H1 (cell line): ENCODE measurements at regions of chr4 and their contacts with region 1.

Region 1: DNA sequence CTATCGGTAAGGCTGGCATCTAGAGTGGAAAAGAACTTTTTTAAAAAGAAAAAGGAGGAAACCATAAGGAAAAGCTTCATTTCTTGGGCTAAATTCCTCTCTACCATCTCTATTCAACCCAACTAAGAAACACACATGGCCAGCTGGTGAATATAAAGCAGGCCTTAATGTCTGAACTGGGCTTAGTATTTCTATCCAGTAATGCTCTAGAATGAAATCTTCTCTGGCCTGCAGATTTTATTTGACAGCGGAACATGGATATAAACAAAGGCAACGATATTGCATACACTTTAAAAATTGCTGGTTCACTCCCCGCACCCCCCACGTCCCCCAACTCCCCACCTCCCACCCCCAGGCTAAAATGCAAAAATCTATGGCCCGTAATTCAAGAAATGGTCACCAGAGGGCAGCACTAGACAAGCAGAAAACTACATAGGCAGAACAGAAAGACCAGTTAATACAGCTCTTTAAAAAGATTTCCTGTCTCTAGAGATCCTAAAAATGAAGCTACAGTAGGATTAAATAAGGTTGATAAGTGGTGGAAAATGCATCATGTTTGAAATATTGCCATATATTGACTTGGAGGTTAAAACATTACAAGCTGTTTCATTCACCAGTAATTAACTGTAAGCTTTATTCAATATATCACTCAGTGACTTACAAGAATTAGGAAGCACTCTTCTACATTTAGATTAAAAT is 155.2 kb upstream of the GALNT7 start:
- DNase-seq: peak in 1 of 2 experiments; percentile 88
- H3K4me3 ChIP-seq: no peak overlapping the region
- H3K27ac ChIP-seq: no peak overlapping the region
- H3K4me1 ChIP-seq: peaks cover 0 to 3% (median 1%) of the 10 kb centered on the region in 4 experiments; a peak in 4 of 7 replicates
- H3K27me3 ChIP-seq: no peaks in the 10 kb centered on the region
- CTCF ChIP-seq: peak in 2 of 3 experiments; percentile 46 to 69; a peak in 3 of 4 replicates
- EP300 ChIP-seq: no peak
- POLR2A ChIP-seq: no peak
- RAD21 ChIP-seq: peak; percentile 80 to 86

Region 2: DNA sequence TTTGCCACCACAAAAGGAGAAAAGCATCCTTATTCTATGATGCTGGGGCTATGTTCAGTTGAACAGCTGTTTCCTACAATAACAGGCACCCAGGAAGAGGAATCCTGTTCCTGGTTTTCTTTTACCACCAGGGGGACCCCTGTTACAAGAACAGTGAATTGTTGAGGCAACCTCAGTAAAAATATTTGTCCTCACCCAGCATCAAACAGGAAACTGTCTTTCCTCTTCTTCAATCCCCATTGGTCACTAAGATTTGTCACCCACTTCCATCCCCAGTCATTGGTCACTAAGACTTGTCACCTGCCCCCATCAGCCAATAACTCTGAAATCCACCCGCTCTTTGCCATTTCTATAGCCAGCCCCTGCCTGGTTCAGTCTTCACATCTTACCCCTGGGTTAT is 11.8 kb after region 1 on chr4:
- CTCF ChIA-PET with region 1: interaction called, 44 read pairs
- POLR2A ChIA-PET with region 1: interaction called, 4 read pairs
- DNase-seq: peak; percentile 27 to 60
- H3K4me3 ChIP-seq: no peak overlapping the region
- H3K27ac ChIP-seq: no peak overlapping the region
- H3K4me1 ChIP-seq: peaks cover 2 to 8% (median 4%) of the 10 kb centered on the region in 4 experiments; a peak in 4 of 7 replicates
- H3K27me3 ChIP-seq: no peaks in the 10 kb centered on the region
- CTCF ChIP-seq: peak in 2 of 3 experiments; percentile 68 to 81; a peak in 3 of 4 replicates
- EP300 ChIP-seq: no peak
- POLR2A ChIP-seq: no peak
- RAD21 ChIP-seq: peak; percentile 94

Region 3: GRCh38 chr4:173061160-173061559 is 47.8 kb after region 1 on chr4:
- CTCF ChIA-PET with region 1: no interaction called
- POLR2A ChIA-PET with region 1: no interaction called
- DNase-seq: no peak
- H3K4me3 ChIP-seq: no peak overlapping the region
- H3K27ac ChIP-seq: no peak overlapping the region
- H3K4me1 ChIP-seq: peaks cover 0 to 5% (median 0%) of the 10 kb centered on the region in 4 experiments; a peak in 2 of 7 replicates
- H3K27me3 ChIP-seq: no peaks in the 10 kb centered on the region
- CTCF ChIP-seq: no peak
- EP300 ChIP-seq: no peak
- POLR2A ChIP-seq: no peak
- RAD21 ChIP-seq: no peak

Region 4: DNA sequence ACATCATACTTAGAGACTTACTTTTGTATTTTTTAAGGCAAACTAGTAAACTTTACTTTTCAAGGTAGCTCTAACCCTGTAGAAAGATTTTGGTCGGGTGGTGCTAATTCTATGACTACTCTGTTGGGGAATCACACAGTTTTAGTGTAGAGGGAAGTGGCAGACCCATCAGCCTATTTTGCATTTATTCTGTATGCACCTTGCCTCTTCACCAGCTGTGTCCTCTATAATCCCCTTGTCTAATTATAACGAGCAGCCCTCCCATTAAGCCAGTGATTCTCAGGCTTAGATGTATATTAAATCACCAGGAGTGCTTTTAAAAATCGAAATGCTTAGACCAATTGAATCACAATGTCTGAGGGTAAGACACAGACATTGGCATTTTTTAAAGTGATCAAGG is 233.3 kb after region 1 on chr4:
- CTCF ChIA-PET with region 1: interaction called, 10 read pairs
- POLR2A ChIA-PET with region 1: no interaction called
- DNase-seq: no peak
- H3K4me3 ChIP-seq: peak overlapping the region in 1 of 4 experiments; percentile 13; a peak in 1 of 8 replicates
- H3K27ac ChIP-seq: no peak overlapping the region
- H3K4me1 ChIP-seq: peaks cover 1 to 30% (median 17%) of the 10 kb centered on the region in 4 experiments
- H3K27me3 ChIP-seq: no peaks in the 10 kb centered on the region; a peak in 1 of 7 replicates
- CTCF ChIP-seq: no peak
- EP300 ChIP-seq: no peak
- POLR2A ChIP-seq: 0 out of 3 replicates have a peak, but pooled peaks of 1 of the 2 experiments have one; percentile 26
- RAD21 ChIP-seq: no peak

Region 5: GRCh38 chr4:173280998-173281397 is 267.6 kb after region 1 on chr4:
- CTCF ChIA-PET with region 1: interaction called, 32 read pairs
- POLR2A ChIA-PET with region 1: no interaction called
- DNase-seq: no peak
- H3K4me3 ChIP-seq: no peak overlapping the region
- H3K27ac ChIP-seq: no peak overlapping the region
- H3K4me1 ChIP-seq: no peaks in the 10 kb centered on the region
- H3K27me3 ChIP-seq: no peaks in the 10 kb centered on the region
- CTCF ChIP-seq: peak; percentile 21 to 42 (median 36); a peak in 3 of 4 replicates
- EP300 ChIP-seq: no peak
- POLR2A ChIP-seq: no peak
- RAD21 ChIP-seq: peak; percentile 41 to 50

Region 6: DNA sequence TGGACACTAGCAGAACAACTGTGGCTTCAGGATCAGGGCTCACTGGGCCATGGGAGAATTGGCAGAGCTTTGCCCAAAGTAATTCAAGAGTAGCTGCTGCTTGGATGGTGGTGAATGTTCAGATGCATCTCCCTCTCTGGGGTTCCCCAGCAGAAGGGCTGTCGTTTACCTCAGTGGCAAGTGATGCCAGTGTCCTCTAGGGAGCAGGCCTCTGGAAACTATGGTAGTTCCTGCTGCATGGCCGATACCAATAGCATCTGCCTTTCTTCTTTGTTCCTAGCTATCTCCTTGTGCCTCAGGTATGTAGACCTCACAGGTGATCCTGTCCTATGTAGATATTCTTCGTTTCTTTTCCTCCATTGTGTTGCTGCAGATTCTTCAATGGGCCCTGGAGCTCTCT is 294.4 kb after region 1 on chr4:
- CTCF ChIA-PET with region 1: interaction called, 21 read pairs
- POLR2A ChIA-PET with region 1: interaction called, 3 read pairs
- DNase-seq: no peak
- H3K4me3 ChIP-seq: no peak overlapping the region
- H3K27ac ChIP-seq: no peak overlapping the region
- H3K4me1 ChIP-seq: no peaks in the 10 kb centered on the region; a peak in 1 of 7 replicates
- H3K27me3 ChIP-seq: no peaks in the 10 kb centered on the region
- CTCF ChIP-seq: peak in 2 of 3 experiments; percentile 4 to 14; a peak in 2 of 4 replicates
- EP300 ChIP-seq: no peak
- POLR2A ChIP-seq: no peak
- RAD21 ChIP-seq: no peak

Region 7: GRCh38 chr4:173420324-173420752 is 407.0 kb after region 1 on chr4:
- CTCF ChIA-PET with region 1: interaction called, 43 read pairs
- POLR2A ChIA-PET with region 1: no interaction called
- DNase-seq: no peak
- H3K4me3 ChIP-seq: no peak overlapping the region
- H3K27ac ChIP-seq: no peak overlapping the region
- H3K4me1 ChIP-seq: no peaks in the 10 kb centered on the region
- H3K27me3 ChIP-seq: no peaks in the 10 kb centered on the region
- CTCF ChIP-seq: peak in 2 of 3 experiments; percentile 21 to 25; a peak in 2 of 4 replicates
- EP300 ChIP-seq: no peak
- POLR2A ChIP-seq: no peak
- RAD21 ChIP-seq: peak; percentile 40 to 51